Posterior vena cava (tissue), 2 donors: ENCODE measurements at regions of chr7 and their contacts with region 1.

Region 1: DNA sequence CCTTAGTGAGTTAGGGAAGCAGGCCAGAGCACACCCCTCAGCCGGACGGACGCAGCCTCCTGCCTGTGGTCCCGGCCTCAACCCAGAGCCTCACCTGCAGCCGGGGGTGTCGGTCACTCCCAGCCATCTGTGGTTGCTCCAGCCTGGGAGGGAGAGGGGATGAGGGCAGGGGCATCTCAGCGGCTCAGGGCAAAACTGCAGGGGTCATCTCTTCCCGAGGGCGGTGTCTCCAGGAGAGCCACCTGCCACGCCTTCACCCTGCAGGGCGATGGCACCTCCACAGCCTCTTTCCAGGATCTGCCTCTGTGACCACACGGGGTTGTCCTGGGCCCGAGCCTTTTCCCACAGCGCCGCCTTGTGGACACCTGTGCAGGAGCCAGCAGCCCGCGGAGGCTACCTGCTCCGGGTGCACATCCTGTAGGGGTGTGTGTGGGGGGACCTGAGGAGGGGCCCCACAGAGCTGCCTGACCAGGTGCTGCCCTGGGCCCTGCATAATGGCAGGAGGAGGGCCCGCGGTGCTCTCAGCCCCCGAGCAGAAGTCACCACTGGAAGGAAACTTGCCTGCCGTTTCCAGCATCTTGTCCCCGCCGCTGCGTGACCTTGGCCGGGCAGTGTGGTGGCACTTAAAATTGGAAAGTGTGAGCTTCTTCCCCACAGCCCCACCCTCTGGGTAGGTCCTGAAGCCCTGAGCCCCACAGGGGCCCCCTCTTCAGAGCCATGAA is 21.6 kb upstream of the AP5Z1 start:
- DNase-seq: peak; percentile 92

Region 2: GRCh38 chr7:4204513-4205165 is 549.2 kb before region 1 on chr7:
- intact Hi-C with region 1: no loop called
- DNase-seq: peak; percentile 53

Region 3: DNA sequence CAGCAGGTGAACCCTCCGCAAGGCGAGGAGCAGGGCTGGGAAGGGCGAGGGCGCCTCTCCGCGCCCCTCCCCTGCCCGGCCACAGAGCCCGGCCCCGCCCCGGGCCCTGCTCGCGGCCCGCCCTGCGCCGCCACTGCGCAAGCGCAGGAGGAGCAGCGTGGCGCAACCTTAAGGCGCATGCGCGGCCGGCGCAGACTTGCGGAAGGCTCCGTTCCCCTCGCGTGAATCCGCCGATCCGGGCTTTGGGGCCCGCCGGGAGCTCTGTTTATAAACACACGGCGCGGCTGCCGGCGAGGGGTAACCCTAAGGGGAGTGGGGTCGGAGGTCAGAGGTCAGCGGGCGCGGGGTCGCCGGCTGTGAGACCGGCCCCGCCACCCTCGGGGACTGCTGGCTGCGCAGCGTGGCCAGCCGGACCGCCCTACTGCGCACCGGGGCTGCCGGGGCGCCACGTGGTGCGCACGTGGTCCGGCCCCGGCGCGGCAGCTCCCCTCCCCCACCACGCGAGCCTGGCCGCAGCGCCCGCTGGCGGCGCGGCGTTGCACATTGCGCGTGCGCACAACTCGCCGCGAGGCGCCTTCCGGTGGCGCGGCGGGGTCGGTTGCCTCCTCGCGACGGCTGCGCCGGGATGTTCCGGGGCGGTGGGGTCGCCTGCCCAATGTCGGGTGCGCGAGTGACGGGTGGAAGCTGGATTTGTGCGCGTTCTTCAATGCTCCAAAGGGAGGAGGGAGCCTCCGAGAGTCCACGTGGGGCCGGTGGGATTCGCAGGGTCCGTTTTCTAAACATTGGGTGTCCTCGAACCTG is 112.0 kb before region 1 on chr7:
- intact Hi-C with region 1: loop called (anchors 5 to 10 kb)
- DNase-seq: peak; percentile 99